Activated B cell treated with CpG ODN at 0.5 μM for 24 hours (primary cell): ENCODE measurements at regions of chr7 and their contacts with region 1.

Region 1: GRCh38 chr7:4861673-4862072 is at the start of gene PAPOLB:
- DNase-seq: peak; percentile 23
- ATAC-seq: peak; percentile 79
- H3K4me3 Mint-ChIP-seq: peak within 1 kb of the TSS; percentile 61
- H3K27ac Mint-ChIP-seq: peak within 1 kb of the TSS; percentile 51
- H3K4me1 Mint-ChIP-seq: peaks cover 5% of the 10 kb centered on the region
- H3K27me3 Mint-ChIP-seq: peaks cover 47% of the 10 kb centered on the region
- CTCF ChIP-seq: no peak
- total RNA-seq, gene PAPOLB: 0.07 TPM in 1 of 2 replicates, not detected in the other

Region 2: GRCh38 chr7:4916115-4916514 is 54.4 kb after region 1 on chr7:
- CTCF ChIA-PET with region 1: no interaction called
- POLR2A ChIA-PET with region 1: interaction called, 15 read pairs
- intact Hi-C with region 1: no loop called
- DNase-seq: no peak
- ATAC-seq: no peak
- H3K4me3 Mint-ChIP-seq: no peak overlapping the region
- H3K27ac Mint-ChIP-seq: no peak overlapping the region
- H3K4me1 Mint-ChIP-seq: no peaks in the 10 kb centered on the region
- H3K27me3 Mint-ChIP-seq: no peaks in the 10 kb centered on the region
- CTCF ChIP-seq: no peak

Region 3: DNA sequence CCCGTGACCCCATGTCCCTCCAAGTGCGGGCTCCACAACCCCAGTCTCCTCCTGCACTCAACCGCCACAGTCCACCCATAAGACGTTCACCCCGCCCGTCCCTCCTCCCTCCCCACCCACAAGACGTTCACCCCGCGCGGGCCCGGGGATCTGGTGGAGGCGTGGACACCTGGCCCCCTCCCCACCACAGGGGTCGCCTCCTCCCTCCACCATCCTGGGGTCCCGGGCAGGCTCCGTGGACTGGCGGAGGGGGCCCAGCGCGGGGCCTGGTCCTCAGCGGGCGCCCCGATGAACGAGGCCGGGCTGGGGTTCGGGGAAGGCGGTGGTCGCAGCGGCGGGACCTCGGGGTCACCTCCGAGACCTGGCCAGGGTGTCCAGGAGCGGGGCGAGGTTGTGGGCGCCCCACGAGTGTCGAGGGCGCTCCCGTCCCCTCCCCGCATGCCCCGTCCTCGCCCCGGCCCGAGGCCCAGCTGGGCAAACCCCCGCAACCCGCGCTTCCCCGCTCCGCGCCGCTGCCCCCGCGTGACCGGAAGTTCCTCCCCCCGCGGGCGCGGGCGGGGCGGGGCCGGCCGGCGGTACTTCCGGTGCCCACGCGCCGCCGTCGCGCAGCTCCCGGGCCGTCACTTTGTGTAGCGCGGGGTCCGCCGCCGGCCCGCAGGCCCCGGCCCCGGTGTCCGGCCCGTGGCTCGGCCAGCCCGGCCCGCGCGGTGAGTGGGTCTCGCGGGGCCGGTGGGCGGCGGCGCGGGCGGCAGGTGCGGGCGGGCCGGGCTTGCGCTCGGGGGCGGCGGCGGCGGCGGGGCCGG is 1775.3 kb after region 1 on chr7 and contains the start of gene ZNF316:
- CTCF ChIA-PET with region 1: no interaction called
- POLR2A ChIA-PET with region 1: no interaction called
- intact Hi-C with region 1: no loop called
- DNase-seq: peak; percentile 84
- ATAC-seq: peak; percentile 62
- H3K4me3 Mint-ChIP-seq: peak within 1 kb of the TSS; percentile 86
- H3K27ac Mint-ChIP-seq: peak within 1 kb of the TSS; percentile 82
- H3K4me1 Mint-ChIP-seq: peaks cover 29% of the 10 kb centered on the region
- H3K27me3 Mint-ChIP-seq: no peaks in the 10 kb centered on the region
- CTCF ChIP-seq: no peak
- total RNA-seq, gene ZNF316: 40.3 and 43.8 TPM in 2 replicates